Psoas muscle (tissue), 8 donors: ENCODE measurements at regions of chr6 and their contacts with region 1.

Region 1: GRCh38 chr6:128731249-128732165 is 151.4 kb upstream of the LAMA2 start:
- DNase-seq: no peak
- ATAC-seq: peak in 2 of 4 donors; percentile 46 to 61
- H3K4me3 ChIP-seq: no peak overlapping the region
- H3K27ac ChIP-seq: no peak overlapping the region
- H3K4me1 ChIP-seq: no peaks in the 10 kb centered on the region
- H3K27me3 ChIP-seq: no peaks in the 10 kb centered on the region
- CTCF ChIP-seq: peak; percentile 46

Region 2: GRCh38 chr6:127855542-127856159 is 875.9 kb before region 1 on chr6:
- intact Hi-C with region 1: loop called in 1 of 2 experiments (anchors 10 kb)
- DNase-seq: no peak
- ATAC-seq: no peak
- H3K4me3 ChIP-seq: no peak overlapping the region
- H3K27ac ChIP-seq: no peak overlapping the region
- H3K4me1 ChIP-seq: no peaks in the 10 kb centered on the region
- H3K27me3 ChIP-seq: no peaks in the 10 kb centered on the region
- CTCF ChIP-seq: peak; percentile 34